ENCODE measurements at regions of chr9 and their contacts with region 1.

Region 1: GRCh38 chr9:4984621-4985385 is at the start of gene JAK2:
- DNase-seq: peak; percentile 50 to 93 (median 70)
- ATAC-seq: peak; percentile 85
- H3K4me3 ChIP-seq: peak within 1 kb of the TSS; percentile 87
- H3K4me3 Mint-ChIP-seq: peak within 1 kb of the TSS; percentile 94
- H3K27ac ChIP-seq: peak within 1 kb of the TSS; percentile 65 to 85
- H3K27ac Mint-ChIP-seq: peak within 1 kb of the TSS; percentile 79
- H3K4me1 ChIP-seq: peaks cover 33% of the 10 kb centered on the region
- H3K4me1 Mint-ChIP-seq: peaks cover 27% of the 10 kb centered on the region
- H3K27me3 ChIP-seq: no peaks in the 10 kb centered on the region
- H3K27me3 Mint-ChIP-seq: no peaks in the 10 kb centered on the region
- CTCF ChIP-seq: peak; percentile 24
- total RNA-seq, gene JAK2: 7.2 to 7.5 TPM

Region 2: DNA sequence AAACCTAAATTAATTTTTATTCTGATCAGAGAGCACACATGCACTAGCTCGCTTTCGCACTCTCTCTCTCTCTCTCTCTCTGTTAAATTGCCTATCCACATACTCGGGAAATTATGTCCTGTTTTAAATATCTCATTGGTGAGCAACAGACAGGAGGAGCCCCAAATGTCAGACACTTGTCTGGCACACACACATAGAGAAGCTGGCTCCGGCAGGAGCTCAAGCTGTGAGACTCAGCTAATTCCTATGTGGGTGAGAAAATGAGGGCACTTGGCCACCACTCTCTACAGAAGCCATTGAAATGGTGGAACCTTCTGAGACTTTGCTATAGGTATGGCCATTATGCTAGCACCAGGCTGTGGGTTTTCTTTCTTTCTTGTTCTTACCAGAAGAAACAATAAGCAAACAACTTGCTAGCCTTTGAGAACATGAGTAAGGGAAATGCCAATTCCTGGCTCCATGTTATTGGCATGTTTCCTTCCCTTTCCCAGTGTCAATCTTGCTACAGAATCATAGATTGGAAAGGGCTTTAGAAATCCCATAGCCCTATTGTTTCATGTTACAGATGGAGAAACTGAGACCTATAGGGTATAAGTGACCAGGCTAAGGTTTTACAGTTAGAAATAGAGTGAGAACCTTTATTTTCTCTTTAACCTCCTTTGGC is 1468.0 kb before region 1 on chr9:
- CTCF ChIA-PET with region 1: no interaction called
- POLR2A ChIA-PET with region 1: no interaction called
- intact Hi-C with region 1: loop called in 1 of 2 experiments (anchors 10 kb)
- DNase-seq: no peak
- ATAC-seq: no peak
- H3K4me3 ChIP-seq: no peak overlapping the region
- H3K4me3 Mint-ChIP-seq: no peak overlapping the region
- H3K27ac ChIP-seq: no peak overlapping the region
- H3K27ac Mint-ChIP-seq: no peak overlapping the region
- H3K4me1 ChIP-seq: peaks cover 6% of the 10 kb centered on the region
- H3K4me1 Mint-ChIP-seq: peaks cover 45% of the 10 kb centered on the region
- H3K27me3 ChIP-seq: no peaks in the 10 kb centered on the region
- H3K27me3 Mint-ChIP-seq: no peaks in the 10 kb centered on the region
- CTCF ChIP-seq: no peak

Region 3: GRCh38 chr9:4382722-4383317 is 602.0 kb before region 1 on chr9:
- CTCF ChIA-PET with region 1: no interaction called
- POLR2A ChIA-PET with region 1: interaction called, 3 read pairs
- intact Hi-C with region 1: loop called (anchors 5 kb)
- DNase-seq: peak in 4 of 14 experiments; percentile 21 to 58 (median 47)
- ATAC-seq: peak; percentile 37
- H3K4me3 ChIP-seq: no peak overlapping the region
- H3K4me3 Mint-ChIP-seq: no peak overlapping the region
- H3K27ac ChIP-seq: no peak overlapping the region
- H3K27ac Mint-ChIP-seq: no peak overlapping the region
- H3K4me1 ChIP-seq: no peaks in the 10 kb centered on the region
- H3K4me1 Mint-ChIP-seq: peaks cover 4% of the 10 kb centered on the region
- H3K27me3 ChIP-seq: no peaks in the 10 kb centered on the region
- H3K27me3 Mint-ChIP-seq: no peaks in the 10 kb centered on the region
- CTCF ChIP-seq: peak; percentile 63

Region 4: DNA sequence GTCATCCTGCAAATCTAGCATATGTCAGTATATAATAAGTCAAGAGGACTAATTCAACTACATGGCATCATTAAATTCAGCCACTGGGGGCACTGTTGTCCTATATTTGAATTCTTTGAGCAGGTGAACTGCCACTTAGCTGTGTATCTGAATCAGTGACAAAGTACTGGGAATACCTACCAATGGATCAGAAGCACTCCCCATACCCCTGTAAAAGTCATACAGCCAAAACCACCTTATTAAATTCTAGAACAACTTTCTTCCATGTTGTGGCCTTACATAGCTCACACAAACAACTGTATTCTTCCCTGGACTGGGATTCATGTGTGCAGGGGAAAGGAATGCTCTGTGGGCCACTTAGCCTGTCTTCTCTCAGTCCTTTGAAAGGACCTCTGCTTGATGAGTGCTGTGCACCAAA is 380.1 kb before region 1 on chr9:
- CTCF ChIA-PET with region 1: interaction called, 3 read pairs
- POLR2A ChIA-PET with region 1: no interaction called
- intact Hi-C with region 1: loop called (anchors 5 to 10 kb)
- DNase-seq: peak in 13 of 14 experiments; percentile 20 to 83 (median 61)
- ATAC-seq: peak; percentile 74
- H3K4me3 ChIP-seq: no peak overlapping the region
- H3K4me3 Mint-ChIP-seq: no peak overlapping the region
- H3K27ac ChIP-seq: no peak overlapping the region
- H3K27ac Mint-ChIP-seq: peak overlapping the region; percentile 66
- H3K4me1 ChIP-seq: peaks cover 26% of the 10 kb centered on the region
- H3K4me1 Mint-ChIP-seq: peaks cover 54% of the 10 kb centered on the region
- H3K27me3 ChIP-seq: no peaks in the 10 kb centered on the region
- H3K27me3 Mint-ChIP-seq: no peaks in the 10 kb centered on the region
- CTCF ChIP-seq: peak; percentile 77

Region 5: DNA sequence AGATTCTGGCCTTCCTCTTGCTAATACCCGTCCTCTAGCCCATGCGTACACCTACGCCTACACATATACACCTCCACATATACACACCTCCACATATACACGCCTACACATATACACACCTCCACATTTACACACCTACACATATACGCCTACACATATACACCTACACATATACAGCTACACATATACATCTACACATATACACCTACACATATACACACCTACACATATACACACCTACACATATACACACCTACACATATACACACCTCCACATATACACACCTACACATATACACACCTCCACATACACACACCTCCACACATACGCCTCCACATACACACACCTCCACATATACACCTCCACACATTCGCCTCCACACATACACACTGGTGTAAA is 271.0 kb before region 1 on chr9:
- CTCF ChIA-PET with region 1: no interaction called
- POLR2A ChIA-PET with region 1: no interaction called
- intact Hi-C with region 1: no loop called
- DNase-seq: peak in 2 of 14 experiments; percentile 9 to 15
- ATAC-seq: no peak
- H3K4me3 ChIP-seq: no peak overlapping the region
- H3K4me3 Mint-ChIP-seq: no peak overlapping the region
- H3K27ac ChIP-seq: no peak overlapping the region
- H3K27ac Mint-ChIP-seq: no peak overlapping the region
- H3K4me1 ChIP-seq: no peaks in the 10 kb centered on the region
- H3K4me1 Mint-ChIP-seq: no peaks in the 10 kb centered on the region
- H3K27me3 ChIP-seq: no peaks in the 10 kb centered on the region
- H3K27me3 Mint-ChIP-seq: no peaks in the 10 kb centered on the region
- CTCF ChIP-seq: no peak

Region 6: GRCh38 chr9:4740638-4741364 is 244.0 kb before region 1 on chr9 and contains the start of gene AK3:
- CTCF ChIA-PET with region 1: no interaction called
- POLR2A ChIA-PET with region 1: interaction called, 13 read pairs
- intact Hi-C with region 1: loop called in 1 of 2 experiments (anchors 5 kb)
- DNase-seq: peak; percentile 61 to 94 (median 80)
- ATAC-seq: peak; percentile 92
- H3K4me3 ChIP-seq: peak within 1 kb of the TSS; percentile 86
- H3K4me3 Mint-ChIP-seq: peak within 1 kb of the TSS; percentile 97
- H3K27ac ChIP-seq: peak within 1 kb of the TSS; percentile 57 to 66
- H3K27ac Mint-ChIP-seq: peak within 1 kb of the TSS; percentile 83
- H3K4me1 ChIP-seq: peaks cover 28% of the 10 kb centered on the region
- H3K4me1 Mint-ChIP-seq: peaks cover 36% of the 10 kb centered on the region
- H3K27me3 ChIP-seq: no peaks in the 10 kb centered on the region
- H3K27me3 Mint-ChIP-seq: no peaks in the 10 kb centered on the region
- CTCF ChIP-seq: no peak
- total RNA-seq, gene AK3: 19.9 to 20.9 TPM

Region 7: GRCh38 chr9:4792572-4793458 is 192.0 kb before region 1 on chr9 and contains the start of gene RCL1:
- CTCF ChIA-PET with region 1: no interaction called
- POLR2A ChIA-PET with region 1: interaction called, 33 read pairs
- intact Hi-C with region 1: loop called in 1 of 2 experiments (anchors 2 kb)
- DNase-seq: peak; percentile 89 to 98 (median 94)
- ATAC-seq: peak; percentile 89
- H3K4me3 ChIP-seq: peak within 1 kb of the TSS; percentile 87
- H3K4me3 Mint-ChIP-seq: peak within 1 kb of the TSS; percentile 97
- H3K27ac ChIP-seq: peak within 1 kb of the TSS; percentile 83 to 87
- H3K27ac Mint-ChIP-seq: peak within 1 kb of the TSS; percentile 92
- H3K4me1 ChIP-seq: peaks cover 25% of the 10 kb centered on the region
- H3K4me1 Mint-ChIP-seq: peaks cover 45% of the 10 kb centered on the region
- H3K27me3 ChIP-seq: no peaks in the 10 kb centered on the region
- H3K27me3 Mint-ChIP-seq: no peaks in the 10 kb centered on the region
- CTCF ChIP-seq: no peak
- total RNA-seq, gene RCL1: 33.8 to 35.5 TPM

Region 8: DNA sequence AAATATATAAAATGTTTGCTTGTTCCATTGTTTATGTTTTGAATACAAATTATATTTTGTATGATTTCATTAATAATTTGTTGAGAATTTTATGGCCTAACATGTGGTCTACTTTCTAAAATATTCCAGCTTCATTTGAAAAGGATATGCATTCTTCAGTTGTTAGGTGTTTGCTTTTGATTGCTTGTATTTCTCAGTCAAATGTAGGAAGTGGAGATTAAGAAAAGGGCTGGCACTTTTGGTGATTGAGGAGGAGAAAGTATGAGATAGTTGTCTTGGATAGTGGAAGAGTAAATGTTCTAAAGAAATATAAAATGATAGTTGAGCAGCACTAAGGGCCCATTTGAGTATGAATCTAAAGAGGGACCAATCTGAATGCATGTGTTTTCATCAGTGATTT is 23.4 kb after region 1 on chr9:
- CTCF ChIA-PET with region 1: no interaction called
- POLR2A ChIA-PET with region 1: no interaction called
- intact Hi-C with region 1: no loop called
- DNase-seq: no peak
- ATAC-seq: no peak
- H3K4me3 ChIP-seq: no peak overlapping the region
- H3K4me3 Mint-ChIP-seq: no peak overlapping the region
- H3K27ac ChIP-seq: no peak overlapping the region
- H3K27ac Mint-ChIP-seq: no peak overlapping the region
- H3K4me1 ChIP-seq: no peaks in the 10 kb centered on the region
- H3K4me1 Mint-ChIP-seq: peaks cover 20% of the 10 kb centered on the region
- H3K27me3 ChIP-seq: no peaks in the 10 kb centered on the region
- H3K27me3 Mint-ChIP-seq: no peaks in the 10 kb centered on the region
- CTCF ChIP-seq: no peak

Region 9: GRCh38 chr9:5052838-5053237 is 68.0 kb after region 1 on chr9:
- CTCF ChIA-PET with region 1: no interaction called
- POLR2A ChIA-PET with region 1: no interaction called
- intact Hi-C with region 1: no loop called
- DNase-seq: no peak
- ATAC-seq: no peak
- H3K4me3 ChIP-seq: no peak overlapping the region
- H3K4me3 Mint-ChIP-seq: no peak overlapping the region
- H3K27ac ChIP-seq: no peak overlapping the region
- H3K27ac Mint-ChIP-seq: no peak overlapping the region
- H3K4me1 ChIP-seq: no peaks in the 10 kb centered on the region
- H3K4me1 Mint-ChIP-seq: no peaks in the 10 kb centered on the region
- H3K27me3 ChIP-seq: no peaks in the 10 kb centered on the region
- H3K27me3 Mint-ChIP-seq: no peaks in the 10 kb centered on the region
- CTCF ChIP-seq: no peak

Region 10: DNA sequence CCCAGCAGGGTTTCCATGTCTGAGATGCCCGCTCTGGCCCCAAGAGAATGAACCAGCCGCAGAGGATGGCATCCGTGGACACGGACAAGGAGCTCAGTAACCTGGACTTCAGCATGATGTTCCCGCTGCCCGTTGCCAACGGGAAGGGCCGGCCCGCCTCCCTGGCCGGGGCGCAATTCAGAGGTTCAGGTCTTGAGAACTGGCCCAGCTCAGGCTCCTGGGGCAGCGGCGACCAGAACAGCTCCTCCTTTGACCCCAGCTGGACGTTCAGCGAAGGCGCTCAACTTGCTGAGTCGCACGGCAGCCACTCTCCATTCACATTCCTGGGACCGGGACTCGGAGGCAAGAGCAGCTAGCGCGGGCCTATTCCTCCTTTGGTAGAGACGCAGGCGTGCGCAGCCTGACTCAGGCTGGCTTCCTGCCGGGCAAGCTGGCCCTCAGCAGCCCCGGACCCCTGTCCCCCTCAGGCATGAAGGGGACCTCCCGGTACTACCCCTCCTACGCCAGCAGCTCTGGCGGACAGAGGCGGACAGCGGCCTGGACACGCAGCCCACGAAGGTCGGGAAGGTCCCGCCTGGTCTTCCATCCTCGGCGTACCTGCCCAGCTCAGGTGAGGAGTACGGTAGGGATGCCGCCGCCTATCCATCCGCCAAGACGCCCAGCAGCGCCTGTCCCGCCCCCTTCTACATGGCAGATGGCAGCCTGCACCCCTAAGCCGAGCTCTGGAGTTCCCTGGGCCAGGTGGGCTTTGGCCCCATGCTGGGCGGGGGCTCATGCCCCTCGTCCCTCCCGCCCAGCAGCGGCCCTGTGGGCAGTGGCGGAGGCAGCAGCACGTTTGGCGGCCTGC is 126.3 kb after region 1 on chr9:
- CTCF ChIA-PET with region 1: no interaction called
- POLR2A ChIA-PET with region 1: no interaction called
- intact Hi-C with region 1: no loop called
- DNase-seq: peak in 1 of 14 experiments; percentile 11
- ATAC-seq: no peak
- H3K4me3 ChIP-seq: no peak overlapping the region
- H3K4me3 Mint-ChIP-seq: no peak overlapping the region
- H3K27ac ChIP-seq: no peak overlapping the region
- H3K27ac Mint-ChIP-seq: no peak overlapping the region
- H3K4me1 ChIP-seq: no peaks in the 10 kb centered on the region
- H3K4me1 Mint-ChIP-seq: no peaks in the 10 kb centered on the region
- H3K27me3 ChIP-seq: no peaks in the 10 kb centered on the region
- H3K27me3 Mint-ChIP-seq: no peaks in the 10 kb centered on the region
- CTCF ChIP-seq: no peak

Measured in CD4-positive, alpha-beta T cell (primary cell).